ENCODE measurements at regions of chr4 and their contacts with region 1.

Region 1: DNA sequence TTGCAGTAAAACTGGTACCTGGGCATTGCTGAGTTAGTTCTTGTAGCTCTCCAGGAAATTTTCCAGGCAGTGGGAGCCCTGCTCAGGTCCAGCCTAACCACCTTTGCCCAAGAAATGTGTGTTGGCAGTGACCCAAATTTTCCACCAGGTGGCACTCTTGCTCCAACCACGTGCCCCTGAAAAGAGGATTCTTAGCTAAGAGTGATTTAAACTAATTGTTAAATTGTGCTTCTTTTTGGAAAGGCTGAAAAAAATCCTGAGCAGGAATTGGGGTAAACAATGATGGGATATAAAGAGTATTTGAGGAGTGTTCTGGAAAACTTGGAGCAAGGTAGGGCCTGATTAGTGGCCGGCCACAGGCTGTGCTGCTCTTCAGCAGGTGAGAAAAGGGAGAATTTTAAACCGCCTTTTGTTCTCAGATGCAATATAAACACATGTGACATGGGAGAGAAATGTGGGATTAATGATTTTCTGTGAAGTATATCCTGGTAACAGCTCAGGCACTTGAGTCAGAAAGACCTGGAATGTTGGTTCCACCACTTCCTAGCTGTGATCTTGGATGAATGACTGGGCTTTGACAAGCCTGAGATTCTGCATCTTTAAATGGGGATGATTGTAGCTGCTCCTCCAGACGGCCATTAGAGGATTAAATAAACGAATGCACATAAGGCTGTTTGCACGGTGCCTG is 219.6 kb downstream of the PTTG2 start:
- DNase-seq: peak; percentile 75 to 85
- ATAC-seq: peak; percentile 87
- H3K4me3 ChIP-seq: no peak overlapping the region
- H3K27ac ChIP-seq: no peak overlapping the region
- H3K4me1 ChIP-seq: no peaks in the 10 kb centered on the region
- H3K27me3 ChIP-seq: no peaks in the 10 kb centered on the region

Region 2: GRCh38 chr4:38675146-38676121 is 495.6 kb after region 1 on chr4:
- intact Hi-C with region 1: loop called (anchors 2 kb)
- DNase-seq: peak; percentile 80 to 83
- ATAC-seq: peak; percentile 71
- H3K4me3 ChIP-seq: no peak overlapping the region
- H3K27ac ChIP-seq: no peak overlapping the region
- H3K4me1 ChIP-seq: peaks cover 3 to 5% of the 10 kb centered on the region in 2 donors
- H3K27me3 ChIP-seq: no peaks in the 10 kb centered on the region

Region 3: GRCh38 chr4:38730830-38731646 is 551.2 kb after region 1 on chr4:
- intact Hi-C with region 1: loop called (anchors 1 to 2 kb)
- DNase-seq: peak; percentile 89 to 94
- ATAC-seq: peak; percentile 90
- H3K4me3 ChIP-seq: no peak overlapping the region
- H3K27ac ChIP-seq: no peak overlapping the region
- H3K4me1 ChIP-seq: no peaks in the 10 kb centered on the region
- H3K27me3 ChIP-seq: no peaks in the 10 kb centered on the region

Region 4: DNA sequence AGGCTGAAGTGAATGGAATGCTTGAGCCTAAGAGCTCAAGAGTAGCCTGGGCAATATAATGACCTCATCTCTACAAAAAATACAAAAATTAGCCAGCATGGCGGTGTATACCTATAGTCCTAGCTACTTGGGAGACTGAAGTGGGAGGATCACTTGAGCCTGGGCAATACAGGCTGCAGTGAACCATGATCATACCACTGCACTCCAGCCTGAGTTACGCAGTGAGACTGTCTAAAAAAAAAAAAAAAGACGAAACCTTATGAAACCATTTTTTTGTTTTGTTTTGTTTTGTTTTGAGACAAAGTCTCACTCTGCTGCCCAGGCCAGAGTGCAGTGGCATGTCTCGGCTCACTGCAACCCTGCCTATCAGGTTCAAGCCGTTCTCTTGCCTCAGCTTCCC is 566.0 kb after region 1 on chr4:
- intact Hi-C with region 1: loop called in 1 of 2 experiments (anchors 5 kb)
- DNase-seq: no peak
- ATAC-seq: no peak
- H3K4me3 ChIP-seq: no peak overlapping the region
- H3K27ac ChIP-seq: no peak overlapping the region
- H3K4me1 ChIP-seq: peaks cover 0 to 4% of the 10 kb centered on the region in 2 donors
- H3K27me3 ChIP-seq: no peaks in the 10 kb centered on the region

Region 5: GRCh38 chr4:38914854-38915253 is 735.0 kb after region 1 on chr4:
- intact Hi-C with region 1: no loop called
- DNase-seq: no peak
- ATAC-seq: no peak
- H3K4me3 ChIP-seq: no peak overlapping the region
- H3K27ac ChIP-seq: no peak overlapping the region
- H3K4me1 ChIP-seq: no peaks in the 10 kb centered on the region
- H3K27me3 ChIP-seq: no peaks in the 10 kb centered on the region